Adrenal gland (tissue), 19 donors: ENCODE measurements at regions of chr10 and their contacts with region 1.

Region 1: DNA sequence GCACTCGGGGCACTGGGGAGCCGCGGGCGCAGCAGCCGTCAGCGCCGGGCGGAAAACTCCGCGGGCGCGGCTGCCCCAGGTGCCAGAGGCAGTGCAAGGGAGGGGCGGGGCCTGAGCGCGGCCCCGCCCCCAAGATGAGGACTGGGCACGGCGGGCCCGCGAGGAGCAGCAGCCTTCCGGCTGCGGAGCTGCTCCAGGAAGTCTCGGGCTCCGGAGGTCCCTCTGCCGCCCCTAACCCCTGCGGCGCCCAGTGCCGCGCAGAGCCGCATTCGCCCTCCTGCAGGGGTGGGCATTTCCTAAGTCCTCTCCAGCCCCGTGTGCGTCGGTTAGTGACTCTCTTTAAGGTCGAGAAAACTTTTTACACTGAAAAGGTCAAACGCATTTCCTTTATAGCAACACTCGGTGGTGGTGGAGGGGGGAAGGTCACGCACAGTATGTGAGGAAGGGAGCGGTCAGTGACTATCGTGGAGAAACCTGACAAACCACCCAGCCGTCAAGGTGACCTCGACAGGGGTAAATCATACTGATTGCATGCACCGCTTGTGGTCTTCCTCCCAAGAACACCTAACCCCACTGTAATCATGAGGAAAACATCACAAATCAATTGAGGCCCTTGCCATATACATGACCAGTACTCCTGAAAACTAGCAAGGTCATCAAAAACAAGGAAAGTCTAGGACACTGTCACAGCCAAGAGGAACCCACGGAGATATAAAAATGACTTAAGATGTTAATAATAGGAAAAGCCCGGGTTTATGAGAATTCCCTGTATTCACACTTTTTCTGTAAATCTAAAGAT is at the start of gene ANXA11:
- DNase-seq: peak; percentile 72 to 85 (median 81)
- H3K4me3 ChIP-seq: peak within 1 kb of the TSS; percentile 32 to 100 (median 77)
- H3K27ac ChIP-seq: peak within 1 kb of the TSS in 4 of 5 donors; percentile 90 to 98 (median 96)
- H3K4me1 ChIP-seq: peaks cover 10 to 25% of the 10 kb centered on the region in 2 donors
- H3K27me3 ChIP-seq: no peaks in the 10 kb centered on the region
- CTCF ChIP-seq: no peak
- POLR2A ChIP-seq: peak; percentile 72 to 87
- total RNA-seq, gene ANXA11: 39.0 to 99.5 (median 63.6) TPM

Region 2: GRCh38 chr10:79502561-79503309 is 702.9 kb before region 1 on chr10:
- intact Hi-C with region 1: no loop called
- DNase-seq: peak in 2 of 7 donors; percentile 13 to 22
- H3K4me3 ChIP-seq: no peak overlapping the region
- H3K27ac ChIP-seq: no peak overlapping the region
- H3K4me1 ChIP-seq: no peaks in the 10 kb centered on the region
- H3K27me3 ChIP-seq: no peaks in the 10 kb centered on the region
- CTCF ChIP-seq: peak in 4 of 6 experiments; percentile 16 to 31 (median 24)
- POLR2A ChIP-seq: no peak

Region 3: DNA sequence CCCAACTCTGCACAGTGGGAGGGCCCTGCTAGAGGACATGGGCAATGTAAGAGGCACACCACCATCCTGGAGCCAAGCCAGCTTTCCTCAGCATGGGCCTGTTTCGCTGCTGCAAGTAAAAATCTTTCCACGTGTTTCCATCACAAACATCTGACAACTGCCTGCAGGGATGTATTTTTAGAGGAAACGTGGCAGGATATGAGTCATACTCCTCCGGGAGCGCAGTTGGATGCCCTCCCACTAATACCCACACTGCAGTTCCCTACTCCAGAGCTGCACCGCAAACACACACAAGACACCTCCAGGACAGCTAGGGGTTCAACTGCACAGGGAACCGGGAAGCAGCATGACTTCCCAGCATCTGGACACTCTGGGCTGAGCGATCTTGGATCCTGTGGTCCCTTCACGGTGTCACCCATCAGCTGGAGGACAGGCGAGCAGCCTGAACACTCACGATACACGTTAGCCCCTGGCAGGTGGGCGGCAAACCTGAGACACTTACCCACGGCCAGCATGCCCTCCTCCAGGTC is 47.0 kb before region 1 on chr10:
- intact Hi-C with region 1: loop called (anchors 5 kb)
- DNase-seq: peak; percentile 69 to 91 (median 86)
- H3K4me3 ChIP-seq: no peak overlapping the region
- H3K27ac ChIP-seq: peak overlapping the region in 3 of 5 donors; percentile 35 to 89 (median 76)
- H3K4me1 ChIP-seq: peaks cover 4 to 17% of the 10 kb centered on the region in 2 donors
- H3K27me3 ChIP-seq: no peaks in the 10 kb centered on the region
- CTCF ChIP-seq: peak in 1 of 6 experiments; percentile 13
- POLR2A ChIP-seq: no peak

Region 4: GRCh38 chr10:80259405-80259871 is 53.8 kb after region 1 on chr10:
- intact Hi-C with region 1: loop called in 1 of 2 experiments (anchors 5 kb)
- DNase-seq: no peak
- H3K4me3 ChIP-seq: no peak overlapping the region
- H3K27ac ChIP-seq: no peak overlapping the region
- H3K4me1 ChIP-seq: no peaks in the 10 kb centered on the region
- H3K27me3 ChIP-seq: no peaks in the 10 kb centered on the region
- CTCF ChIP-seq: no peak
- POLR2A ChIP-seq: no peak

Region 5: DNA sequence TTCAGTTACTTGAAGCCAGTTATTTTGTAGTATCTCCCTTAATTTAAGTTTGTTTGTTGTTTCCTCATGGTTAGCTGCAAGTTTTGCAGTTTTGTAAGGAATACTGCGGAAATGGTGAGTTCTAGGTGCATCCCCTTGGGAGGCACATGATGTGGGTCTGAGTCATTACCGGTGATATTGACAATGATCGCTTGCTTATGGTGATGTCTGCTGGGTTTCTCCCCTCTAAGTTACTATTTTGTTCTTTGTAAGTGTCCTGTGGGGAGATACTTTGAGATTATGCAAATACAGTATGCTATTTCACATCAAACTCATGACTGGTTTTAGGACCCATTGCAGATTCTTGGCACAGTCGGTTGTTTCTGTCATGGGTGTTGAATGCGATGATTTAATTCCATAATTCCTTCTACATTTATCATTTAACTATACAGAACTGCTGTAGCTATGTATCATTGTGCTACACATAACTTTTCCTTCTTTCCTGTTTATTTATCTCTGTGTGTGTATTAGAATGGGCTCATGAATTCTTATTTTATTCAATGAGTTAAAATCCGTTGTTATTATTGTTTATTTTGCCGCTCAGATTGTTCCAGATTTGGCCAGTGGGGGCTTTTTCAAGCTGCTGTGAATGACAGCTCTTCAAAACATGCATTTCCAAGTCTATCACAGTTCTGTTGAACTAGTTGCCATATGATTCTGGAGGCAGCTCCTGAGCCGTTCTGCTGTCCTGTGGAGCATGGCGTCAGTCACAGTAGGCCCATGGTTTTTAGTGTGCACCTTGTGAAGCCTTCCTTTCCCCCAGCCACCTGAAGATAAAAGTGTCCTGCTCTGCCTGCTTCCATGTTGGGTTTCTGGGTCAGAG is 266.8 kb after region 1 on chr10:
- intact Hi-C with region 1: no loop called
- DNase-seq: peak in 1 of 7 donors; percentile 34
- H3K4me3 ChIP-seq: no peak overlapping the region
- H3K27ac ChIP-seq: peak overlapping the region in 1 of 5 donors; percentile 3
- H3K4me1 ChIP-seq: peaks cover 0 to 38% of the 10 kb centered on the region in 2 donors
- H3K27me3 ChIP-seq: no peaks in the 10 kb centered on the region
- CTCF ChIP-seq: no peak
- POLR2A ChIP-seq: no peak